ENCODE measurements at regions of chr10 and their contacts with region 1.

Region 1: GRCh38 chr10:101467286-101467770 is 113.4 kb downstream of the BTRC start:
- DNase-seq: peak; percentile 52
- H3K4me3 ChIP-seq: no peak overlapping the region; a peak in 1 of 4 replicates
- H3K27ac ChIP-seq: no peak overlapping the region; a peak in 1 of 4 replicates
- H3K4me1 ChIP-seq: peaks cover 0 to 13% of the 10 kb centered on the region in 2 experiments; a peak in 2 of 4 replicates
- H3K27me3 ChIP-seq: no peaks in the 10 kb centered on the region
- CTCF ChIP-seq: peak; percentile 91
- EP300 ChIP-seq: no peak
- RAD21 ChIP-seq: peak; percentile 80

Region 2: GRCh38 chr10:101291331-101292193 is 175.8 kb before region 1 on chr10:
- CTCF ChIA-PET with region 1: interaction called, 108 read pairs
- POLR2A ChIA-PET with region 1: no interaction called
- DNase-seq: peak; percentile 94
- H3K4me3 ChIP-seq: peak overlapping the region; percentile 57 to 75
- H3K27ac ChIP-seq: peak overlapping the region in 1 of 2 experiments; percentile 92; a peak in 2 of 4 replicates
- H3K4me1 ChIP-seq: peaks cover 0 to 15% of the 10 kb centered on the region in 2 experiments; a peak in 1 of 4 replicates
- H3K27me3 ChIP-seq: peaks cover 16% of the 10 kb centered on the region; the same call in 1 of the 2 replicates
- CTCF ChIP-seq: peak; percentile 62
- EP300 ChIP-seq: no peak
- RAD21 ChIP-seq: peak; percentile 66

Region 3: GRCh38 chr10:101311185-101312066 is 155.9 kb before region 1 on chr10:
- CTCF ChIA-PET with region 1: interaction called, 12 read pairs
- POLR2A ChIA-PET with region 1: no interaction called
- DNase-seq: peak; percentile 49
- H3K4me3 ChIP-seq: no peak overlapping the region
- H3K27ac ChIP-seq: peak overlapping the region in 1 of 2 experiments; percentile 32; a peak in 1 of 4 replicates
- H3K4me1 ChIP-seq: peaks cover 0 to 12% of the 10 kb centered on the region in 2 experiments; a peak in 1 of 4 replicates
- H3K27me3 ChIP-seq: peaks cover 3% of the 10 kb centered on the region; the same call in 1 of the 2 replicates
- CTCF ChIP-seq: no peak
- EP300 ChIP-seq: no peak
- RAD21 ChIP-seq: no peak

Region 4: GRCh38 chr10:101367569-101368453 is 99.5 kb before region 1 on chr10:
- CTCF ChIA-PET with region 1: interaction called, 11 read pairs
- POLR2A ChIA-PET with region 1: no interaction called
- DNase-seq: no peak
- H3K4me3 ChIP-seq: no peak overlapping the region
- H3K27ac ChIP-seq: peak overlapping the region in 1 of 2 experiments; percentile 57; a peak in 2 of 4 replicates
- H3K4me1 ChIP-seq: peaks cover 0 to 16% of the 10 kb centered on the region in 2 experiments; a peak in 1 of 4 replicates
- H3K27me3 ChIP-seq: no peaks in the 10 kb centered on the region
- CTCF ChIP-seq: no peak
- EP300 ChIP-seq: no peak
- RAD21 ChIP-seq: no peak

Region 5: DNA sequence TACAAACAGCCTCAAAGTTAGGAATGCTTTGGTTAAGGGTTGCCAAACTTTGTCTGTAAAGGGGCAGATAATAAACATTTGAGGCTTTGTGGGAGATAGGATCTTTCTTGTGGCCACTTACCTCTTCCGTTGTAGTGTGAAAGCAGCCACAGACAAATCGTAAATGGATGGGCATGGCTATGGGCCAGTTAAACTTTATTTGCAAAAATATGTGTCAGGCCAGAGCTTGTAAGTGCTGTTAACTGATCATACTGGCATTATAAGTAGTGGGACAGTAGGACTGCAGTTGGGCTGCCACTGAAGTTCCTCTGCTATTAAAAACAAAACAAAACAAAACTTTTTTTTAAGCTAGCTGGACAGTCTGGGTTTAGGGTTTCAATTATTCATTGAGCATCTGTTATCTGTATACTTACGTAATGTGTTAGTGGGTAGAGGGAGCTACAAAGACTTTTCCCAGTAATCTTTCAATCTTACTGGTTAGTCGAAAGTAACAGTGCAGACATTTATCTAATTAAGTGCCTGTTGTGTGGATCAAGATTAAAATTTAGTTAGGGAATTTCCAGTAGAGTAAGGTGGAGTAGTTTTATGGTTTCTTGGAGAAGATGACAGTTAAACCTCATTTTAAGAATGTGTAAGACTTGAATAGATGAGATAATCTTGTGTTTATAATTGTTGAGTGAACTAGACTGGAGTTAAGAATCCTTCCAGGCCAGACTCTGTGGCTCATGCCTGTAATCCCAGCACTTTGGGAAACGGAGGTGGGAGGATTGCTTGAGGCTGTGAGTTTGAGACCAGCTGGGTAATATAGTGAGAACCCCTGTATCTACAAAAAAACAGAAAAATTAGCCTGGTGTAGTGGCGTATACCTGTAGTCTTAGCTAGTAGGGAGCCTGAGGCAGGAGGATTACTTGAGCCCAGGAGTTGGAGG is 13.3 kb before region 1 on chr10:
- CTCF ChIA-PET with region 1: interaction called, 102 read pairs
- POLR2A ChIA-PET with region 1: interaction called, 3 read pairs
- DNase-seq: no peak
- H3K4me3 ChIP-seq: no peak overlapping the region
- H3K27ac ChIP-seq: peak overlapping the region in 1 of 2 experiments; percentile 12; a peak in 1 of 4 replicates
- H3K4me1 ChIP-seq: peaks cover 0 to 34% of the 10 kb centered on the region in 2 experiments; a peak in 2 of 4 replicates
- H3K27me3 ChIP-seq: no peaks in the 10 kb centered on the region
- CTCF ChIP-seq: no peak
- EP300 ChIP-seq: no peak
- RAD21 ChIP-seq: no peak

Region 6: DNA sequence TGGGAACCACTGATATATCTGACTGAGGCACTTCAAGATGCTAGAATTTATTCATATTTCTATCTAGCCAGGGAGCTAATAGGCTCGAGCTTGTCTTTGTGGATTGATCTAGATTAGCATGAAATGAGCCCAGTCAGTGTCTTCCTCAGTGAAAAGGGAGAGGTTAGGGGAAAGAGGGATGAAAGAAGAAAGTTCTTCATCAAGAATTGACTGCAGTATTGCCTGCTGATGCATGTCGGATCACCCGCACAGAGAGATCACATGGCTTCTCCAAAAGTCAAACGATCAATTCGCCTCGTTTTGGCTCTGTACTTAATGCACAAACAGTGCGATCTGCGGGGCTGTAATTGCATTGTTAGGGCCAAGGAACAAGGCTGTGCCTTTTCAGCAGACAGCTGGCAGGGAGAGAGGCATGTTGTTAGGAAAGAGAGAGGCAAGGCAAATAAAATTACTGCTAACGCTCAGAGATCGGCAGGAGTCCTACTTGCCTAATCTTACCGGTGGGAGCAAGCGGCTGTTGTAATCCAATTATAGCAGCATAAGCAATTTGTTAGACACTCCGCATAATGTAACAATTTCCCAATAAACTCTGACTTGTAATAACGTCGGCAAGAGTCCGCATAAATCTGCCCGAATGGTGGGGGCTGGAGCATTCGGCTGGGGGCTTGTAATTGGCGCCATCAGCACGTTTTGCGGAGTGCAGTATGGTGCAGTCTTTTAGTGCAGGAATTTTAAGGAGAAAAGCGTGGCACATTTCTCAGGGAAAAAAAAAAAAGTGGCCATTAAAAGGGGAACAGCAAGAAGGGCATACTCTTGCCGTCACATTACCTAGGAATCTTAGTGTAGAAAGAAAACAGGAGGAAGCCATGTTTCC is 18.6 kb after region 1 on chr10:
- CTCF ChIA-PET with region 1: interaction called, 81 read pairs
- POLR2A ChIA-PET with region 1: no interaction called
- DNase-seq: peak; percentile 51
- H3K4me3 ChIP-seq: peak overlapping the region in 1 of 2 experiments; percentile 42; a peak in 2 of 4 replicates
- H3K27ac ChIP-seq: peak overlapping the region in 1 of 2 experiments; percentile 43; a peak in 2 of 4 replicates
- H3K4me1 ChIP-seq: peaks cover 6 to 16% of the 10 kb centered on the region in 2 experiments; a peak in 3 of 4 replicates
- H3K27me3 ChIP-seq: no peaks in the 10 kb centered on the region
- CTCF ChIP-seq: no peak
- EP300 ChIP-seq: no peak; a peak in 1 of 4 replicates
- RAD21 ChIP-seq: no peak

Region 7: DNA sequence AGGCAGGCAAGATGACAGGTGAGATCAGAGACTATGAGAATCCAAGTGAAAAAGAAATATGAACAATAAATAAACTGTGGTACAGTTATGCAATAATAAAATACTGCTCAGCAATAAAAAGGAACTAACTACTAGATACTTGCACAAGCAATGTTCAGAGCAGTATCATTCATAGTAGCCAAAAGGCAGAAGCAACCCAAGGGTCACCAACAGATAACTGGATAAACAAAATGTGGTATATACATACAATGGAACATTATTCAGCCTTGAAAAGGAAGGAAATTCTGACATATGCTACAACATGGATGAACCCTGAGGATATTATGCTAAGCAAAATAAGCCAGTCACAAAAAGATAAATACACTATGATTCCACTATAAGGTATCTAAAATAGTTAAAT is 453.2 kb after region 1 on chr10:
- CTCF ChIA-PET with region 1: no interaction called
- POLR2A ChIA-PET with region 1: no interaction called
- DNase-seq: no peak
- H3K4me3 ChIP-seq: no peak overlapping the region
- H3K27ac ChIP-seq: no peak overlapping the region
- H3K4me1 ChIP-seq: no peaks in the 10 kb centered on the region
- H3K27me3 ChIP-seq: no peaks in the 10 kb centered on the region
- CTCF ChIP-seq: no peak
- EP300 ChIP-seq: no peak
- RAD21 ChIP-seq: no peak

Measured in SK-N-SH (cell line).